ENCODE measurements at regions of chr1 and their contacts with region 1.

Region 1: GRCh38 chr1:87292684-87293493 is 35.8 kb upstream of the LMO4 start:
- H3K4me3 Mint-ChIP-seq: no peak overlapping the region
- H3K27ac Mint-ChIP-seq: no peak overlapping the region
- H3K4me1 Mint-ChIP-seq: peaks cover 14% of the 10 kb centered on the region
- H3K27me3 Mint-ChIP-seq: peaks cover 3% of the 10 kb centered on the region

Region 2: DNA sequence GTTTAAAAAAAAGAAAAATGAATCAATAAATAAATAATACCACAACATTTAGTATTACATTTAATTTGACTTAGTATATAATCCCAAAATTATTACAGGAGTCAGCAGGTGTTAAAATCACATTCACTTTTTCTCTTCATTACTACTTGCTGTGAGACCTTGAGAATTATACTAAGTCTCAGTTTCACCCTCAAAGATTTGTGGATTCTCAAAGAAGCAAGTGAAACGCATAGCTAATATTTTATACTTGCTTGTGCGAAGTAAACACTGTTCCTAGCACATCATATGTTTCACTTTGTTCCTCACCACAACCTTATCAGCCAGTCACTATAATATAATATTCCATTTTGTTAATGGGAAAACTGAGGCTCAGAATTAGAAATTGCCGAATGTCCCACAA is 820.1 kb before region 1 on chr1:
- intact Hi-C with region 1: no loop called
- H3K4me3 Mint-ChIP-seq: no peak overlapping the region
- H3K27ac Mint-ChIP-seq: no peak overlapping the region
- H3K4me1 Mint-ChIP-seq: peaks cover 23% of the 10 kb centered on the region
- H3K27me3 Mint-ChIP-seq: no peaks in the 10 kb centered on the region

Region 3: GRCh38 chr1:87131809-87132283 is 161.0 kb before region 1 on chr1:
- intact Hi-C with region 1: loop called (anchors 5 kb)
- H3K4me3 Mint-ChIP-seq: peak overlapping the region; percentile 83
- H3K27ac Mint-ChIP-seq: peak overlapping the region; percentile 64
- H3K4me1 Mint-ChIP-seq: peaks cover 18% of the 10 kb centered on the region
- H3K27me3 Mint-ChIP-seq: peaks cover 4% of the 10 kb centered on the region

Region 4: GRCh38 chr1:87549738-87550137 is 256.8 kb after region 1 on chr1:
- intact Hi-C with region 1: no loop called
- H3K4me3 Mint-ChIP-seq: no peak overlapping the region
- H3K27ac Mint-ChIP-seq: no peak overlapping the region
- H3K4me1 Mint-ChIP-seq: no peaks in the 10 kb centered on the region
- H3K27me3 Mint-ChIP-seq: no peaks in the 10 kb centered on the region

Region 5: DNA sequence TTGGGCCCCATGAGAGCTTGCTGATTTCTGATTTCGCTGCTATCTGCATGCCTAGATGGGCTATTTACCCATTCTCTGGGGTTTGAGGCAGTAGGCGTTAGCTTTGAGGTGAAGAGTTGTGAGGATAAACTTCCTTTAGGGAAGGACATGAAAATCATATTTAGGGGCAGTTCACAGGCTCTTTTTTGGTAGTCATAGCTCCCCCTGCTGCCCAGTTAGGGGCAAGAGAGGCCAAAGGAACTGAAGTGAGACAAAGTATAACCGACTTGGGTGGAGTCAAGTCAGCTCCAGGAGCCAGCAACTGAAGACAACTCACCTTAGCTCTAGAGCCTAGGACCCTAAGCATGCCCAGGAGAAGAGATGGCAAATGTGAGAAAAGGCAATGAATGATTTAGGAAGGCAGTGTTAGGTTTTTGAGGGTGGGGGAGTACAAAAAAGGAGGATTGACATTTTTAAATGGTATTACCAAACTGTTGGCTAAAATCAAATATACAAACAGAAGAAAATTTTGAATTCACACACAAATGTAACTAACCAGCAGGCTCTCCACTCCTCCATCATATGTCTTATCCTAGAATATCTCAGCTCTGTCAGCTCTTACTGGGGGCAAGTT is 660.9 kb after region 1 on chr1:
- intact Hi-C with region 1: loop called (anchors 1 kb)
- H3K4me3 Mint-ChIP-seq: no peak overlapping the region
- H3K27ac Mint-ChIP-seq: no peak overlapping the region
- H3K4me1 Mint-ChIP-seq: peaks cover 13% of the 10 kb centered on the region
- H3K27me3 Mint-ChIP-seq: peaks cover 1% of the 10 kb centered on the region

Region 6: GRCh38 chr1:88061492-88062177 is 768.7 kb after region 1 on chr1:
- intact Hi-C with region 1: loop called (anchors 5 kb)
- H3K4me3 Mint-ChIP-seq: no peak overlapping the region
- H3K27ac Mint-ChIP-seq: no peak overlapping the region
- H3K4me1 Mint-ChIP-seq: no peaks in the 10 kb centered on the region
- H3K27me3 Mint-ChIP-seq: no peaks in the 10 kb centered on the region

Measured in dendritic cell treated with granulocyte-macrophage colony-stimulating factor and Interleukin-4, amounts not matched to agents 40 ng/mL and 50 ng/mL, for 4 days (primary cell).